Transverse colon (tissue), 4 donors: ENCODE measurements at regions of chr2 and their contacts with region 1.

Region 1: GRCh38 chr2:98518090-98518489 is 73.4 kb downstream of the INPP4A start:
- DNase-seq: peak; percentile 47
- H3K4me3 ChIP-seq: no peak overlapping the region
- H3K27ac ChIP-seq: no peak overlapping the region
- H3K4me1 ChIP-seq: peaks cover 7 to 19% (median 13%) of the 10 kb centered on the region in 4 donors
- H3K27me3 ChIP-seq: no peaks in the 10 kb centered on the region
- CTCF ChIP-seq: peak in 3 of 5 experiments; percentile 28 to 35 (median 35)
- EP300 ChIP-seq: no peak
- POLR2A ChIP-seq: no peak

Region 2: DNA sequence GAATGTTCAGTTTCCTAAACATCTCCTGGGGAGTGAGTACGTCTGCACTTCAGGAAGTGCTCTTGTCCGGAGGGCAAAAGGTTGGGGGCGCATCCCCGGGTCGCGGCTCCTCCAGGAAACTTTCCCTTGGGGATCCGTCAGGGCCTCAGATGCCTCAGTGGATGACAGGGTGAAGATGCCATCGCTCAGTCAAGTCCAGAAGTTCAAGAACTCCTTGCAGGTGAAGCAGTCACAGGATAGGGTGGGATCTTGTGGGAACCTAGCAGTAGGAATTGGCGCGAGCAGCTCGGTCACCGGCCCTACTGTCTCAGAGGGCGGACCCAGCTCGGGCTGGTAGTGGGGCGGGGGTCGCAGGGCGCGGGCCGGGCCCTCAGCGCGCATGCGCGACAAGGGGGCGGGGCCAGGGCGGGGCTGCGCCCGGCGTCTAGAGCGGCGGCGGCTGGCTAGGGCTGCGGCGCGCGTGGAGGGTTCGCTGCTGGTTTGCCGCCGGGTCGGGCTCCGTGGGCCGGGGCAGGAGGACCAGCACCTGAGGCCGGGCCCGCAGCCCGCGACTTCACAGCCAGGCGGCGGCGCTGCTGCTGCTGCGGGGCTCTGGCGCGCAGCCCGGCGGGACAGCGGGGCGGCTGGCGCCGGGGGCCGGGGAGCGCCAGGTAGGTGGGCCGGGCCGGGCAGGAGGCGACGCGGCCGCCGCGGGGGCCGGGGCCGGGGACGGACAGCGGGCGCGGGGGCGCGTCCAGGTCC is 73.5 kb before region 1 on chr2 and contains the start of gene INPP4A:
- in situ Hi-C with region 1: no loop called
- intact Hi-C with region 1: loop called (anchors 10 kb)
- DNase-seq: peak; percentile 80
- H3K4me3 ChIP-seq: peak within 1 kb of the TSS; percentile 60 to 88 (median 84)
- H3K27ac ChIP-seq: peak within 1 kb of the TSS; percentile 82 to 89 (median 88)
- H3K4me1 ChIP-seq: peaks cover 5 to 50% (median 25%) of the 10 kb centered on the region in 4 donors
- H3K27me3 ChIP-seq: no peaks in the 10 kb centered on the region
- CTCF ChIP-seq: peak in 1 of 5 experiments; percentile 11
- EP300 ChIP-seq: no peak
- POLR2A ChIP-seq: no peak
- total RNA-seq, gene INPP4A: 22.8 to 35.8 (median 25.4) TPM